Mammary epithelial cell (primary cell): ENCODE measurements at regions of chr7 and their contacts with region 1.

Region 1: DNA sequence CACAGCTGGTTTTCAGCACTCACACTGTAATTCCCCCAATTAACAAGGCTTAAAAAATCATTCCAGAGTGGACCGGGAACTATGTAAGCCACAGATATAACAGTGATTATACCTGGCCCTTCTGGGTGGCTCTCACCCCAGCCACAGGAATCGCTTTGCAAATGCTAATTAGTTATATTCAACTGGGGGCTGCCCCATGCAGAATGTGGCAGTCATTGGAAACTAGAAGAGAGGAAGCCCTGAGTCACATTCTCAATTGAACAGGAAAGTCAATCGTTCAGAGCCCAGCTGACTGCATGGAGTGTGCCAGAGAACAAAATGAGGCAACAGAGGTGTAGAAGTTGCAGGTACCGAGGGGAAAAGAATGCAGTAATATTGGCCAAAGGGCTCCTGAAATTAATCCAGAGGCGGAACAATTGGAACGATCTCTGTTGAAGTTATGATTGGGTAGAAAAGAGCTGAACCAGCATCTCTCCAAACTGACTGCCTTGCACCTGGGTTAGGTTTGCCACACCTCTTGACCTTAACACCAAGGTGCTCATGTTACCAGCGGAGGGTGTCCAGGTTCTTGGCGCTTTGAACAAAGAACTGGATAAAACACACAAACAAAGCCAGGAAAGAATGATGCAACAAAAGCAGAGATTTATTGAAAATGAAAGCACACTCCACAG is 909.7 kb upstream of the AUTS2 start:
- DNase-seq: no peak
- H3K4me3 ChIP-seq: no peak overlapping the region
- H3K27ac ChIP-seq: no peak overlapping the region
- H3K4me1 ChIP-seq: no peaks in the 10 kb centered on the region
- H3K27me3 ChIP-seq: no peaks in the 10 kb centered on the region
- CTCF ChIP-seq: no peak

Region 2: DNA sequence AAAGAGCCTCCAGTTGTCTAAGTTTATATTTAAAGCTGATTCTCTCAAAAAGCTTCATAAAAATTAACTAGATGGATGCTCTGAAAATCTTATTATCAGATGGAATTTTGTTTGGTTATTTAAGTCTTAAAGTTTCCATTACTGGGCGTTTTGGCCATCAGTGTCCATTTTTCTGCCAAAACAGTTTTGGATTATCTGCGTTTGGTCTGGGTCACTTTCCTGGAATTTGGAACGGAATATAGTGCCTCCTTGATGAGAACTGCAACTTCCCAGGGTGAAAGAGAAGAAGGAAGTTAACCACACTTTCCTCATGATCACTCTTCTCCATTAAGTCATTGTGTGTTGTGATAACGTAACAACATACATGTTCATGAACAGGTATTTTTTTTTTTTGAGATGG is 144.9 kb after region 1 on chr7:
- CTCF ChIA-PET with region 1: no interaction called
- dilution Hi-C with region 1: no loop called
- in situ Hi-C with region 1: no loop called
- intact Hi-C with region 1: no loop called
- DNase-seq: no peak
- H3K4me3 ChIP-seq: no peak overlapping the region
- H3K27ac ChIP-seq: no peak overlapping the region
- H3K4me1 ChIP-seq: no peaks in the 10 kb centered on the region
- H3K27me3 ChIP-seq: no peaks in the 10 kb centered on the region
- CTCF ChIP-seq: no peak

Region 3: DNA sequence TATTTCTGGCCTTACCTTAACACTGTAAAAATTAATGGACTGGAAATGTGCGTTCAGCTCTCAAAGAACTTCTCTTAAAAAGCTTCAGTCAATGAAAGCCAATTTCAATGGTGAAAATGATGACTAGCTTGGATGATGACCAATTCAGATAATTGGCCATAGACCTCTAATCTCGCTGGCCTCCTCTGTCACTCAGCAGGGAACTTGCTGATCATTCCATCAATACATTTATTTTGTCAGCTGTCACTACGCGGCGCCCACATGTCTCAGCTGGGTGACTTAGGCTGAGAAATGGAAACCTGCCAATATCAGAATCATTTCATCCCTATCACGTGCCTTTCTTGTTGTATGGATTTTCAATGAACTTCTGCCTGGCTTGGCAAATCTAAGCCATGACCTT is 236.7 kb after region 1 on chr7:
- CTCF ChIA-PET with region 1: no interaction called
- dilution Hi-C with region 1: no loop called
- in situ Hi-C with region 1: no loop called
- intact Hi-C with region 1: no loop called
- DNase-seq: no peak
- H3K4me3 ChIP-seq: no peak overlapping the region
- H3K27ac ChIP-seq: no peak overlapping the region
- H3K4me1 ChIP-seq: no peaks in the 10 kb centered on the region
- H3K27me3 ChIP-seq: no peaks in the 10 kb centered on the region
- CTCF ChIP-seq: no peak

Region 4: GRCh38 chr7:69893906-69894305 is 1205.4 kb after region 1 on chr7:
- CTCF ChIA-PET with region 1: interaction called, 12 read pairs
- dilution Hi-C with region 1: no loop called
- in situ Hi-C with region 1: no loop called
- intact Hi-C with region 1: no loop called
- DNase-seq: no peak
- H3K4me3 ChIP-seq: no peak overlapping the region
- H3K27ac ChIP-seq: no peak overlapping the region
- H3K4me1 ChIP-seq: no peaks in the 10 kb centered on the region
- H3K27me3 ChIP-seq: no peaks in the 10 kb centered on the region
- CTCF ChIP-seq: no peak